ENCODE measurements at regions of chr1 and their contacts with region 1.

Region 1: DNA sequence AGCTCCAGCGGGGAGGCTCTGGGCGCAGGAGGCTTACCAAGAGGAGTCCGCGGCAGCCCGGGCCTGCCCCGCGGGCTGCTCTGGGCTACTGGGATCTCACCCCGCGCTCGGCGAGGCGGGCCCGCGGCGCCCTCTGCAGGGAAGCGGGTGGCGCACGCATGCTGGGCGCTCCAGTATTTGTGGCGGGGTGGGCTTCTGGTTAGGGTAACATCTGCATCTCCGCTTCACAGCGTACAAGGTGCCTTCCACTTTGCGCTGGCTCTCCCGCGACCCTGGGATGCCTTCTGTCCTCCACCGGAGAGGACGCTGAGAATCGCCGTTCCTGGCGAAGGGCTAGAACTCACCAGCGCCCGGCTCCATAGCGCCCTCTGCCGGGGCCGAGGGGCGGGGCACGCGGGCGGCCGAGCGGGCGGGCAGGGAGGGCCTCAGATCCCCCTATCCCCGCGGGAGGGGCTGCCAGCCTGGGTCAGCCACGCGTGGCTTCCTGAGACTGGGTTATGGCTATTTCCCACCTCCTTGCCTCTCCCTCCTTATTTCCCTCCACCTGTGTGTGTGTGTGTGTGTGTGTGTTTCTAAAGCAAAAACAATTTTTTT is 46.6 kb upstream of the CTBS start:
- DNase-seq: peak; percentile 70
- H3K4me3 ChIP-seq: peak overlapping the region; percentile 58 to 72 (median 64)
- H3K27ac ChIP-seq: peak overlapping the region; percentile 34
- H3K4me1 ChIP-seq: peaks cover 13% of the 10 kb centered on the region
- H3K27me3 ChIP-seq: no peaks in the 10 kb centered on the region
- CTCF ChIP-seq: peak; percentile 55 to 77

Region 2: DNA sequence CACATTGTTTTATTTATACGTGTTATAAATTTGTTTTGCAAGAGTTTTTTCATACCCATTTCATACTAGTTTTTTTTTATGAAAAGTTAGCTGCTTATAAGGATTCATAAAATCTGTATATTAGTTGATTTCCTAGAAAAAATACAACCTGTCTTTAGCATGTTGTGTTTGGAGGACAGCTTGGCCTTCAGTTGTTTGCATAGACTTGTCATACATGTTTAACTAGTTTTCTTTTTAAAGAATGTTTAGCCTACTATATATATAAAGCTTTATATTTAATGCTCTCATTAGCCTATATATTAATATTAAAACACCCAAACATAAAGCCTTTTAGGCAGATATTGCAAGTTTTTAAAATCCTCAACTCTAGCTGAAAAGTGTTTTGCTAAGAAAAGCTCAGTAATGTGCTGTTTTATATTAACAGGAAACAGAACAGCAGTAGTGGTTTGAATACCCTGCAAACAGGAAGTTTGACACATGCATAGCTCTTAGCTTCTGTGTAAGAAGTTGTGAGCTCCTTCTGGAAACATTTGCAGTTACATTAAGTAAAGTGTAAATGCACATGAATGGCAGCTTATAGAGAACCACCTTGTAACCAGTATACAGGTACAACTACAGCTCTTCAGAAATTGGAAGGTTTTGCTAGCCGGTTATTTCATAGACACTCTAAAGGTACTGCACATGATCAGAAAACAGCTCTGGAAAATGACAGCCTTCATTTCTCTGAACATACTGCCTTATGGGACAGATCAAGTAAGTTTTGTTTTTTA is 476.8 kb before region 1 on chr1 and contains the start of gene PRKACB:
- CTCF ChIA-PET with region 1: no interaction called
- dilution Hi-C with region 1: no loop called
- in situ Hi-C with region 1: no loop called
- intact Hi-C with region 1: loop called (anchors 5 kb)
- DNase-seq: peak; percentile 27
- H3K4me3 ChIP-seq: no peak within 1 kb of the TSS
- H3K27ac ChIP-seq: no peak within 1 kb of the TSS
- H3K4me1 ChIP-seq: peaks cover 17% of the 10 kb centered on the region
- H3K27me3 ChIP-seq: no peaks in the 10 kb centered on the region
- CTCF ChIP-seq: no peak
- total RNA-seq, gene PRKACB: 25.3 to 29.0 TPM

Region 3: DNA sequence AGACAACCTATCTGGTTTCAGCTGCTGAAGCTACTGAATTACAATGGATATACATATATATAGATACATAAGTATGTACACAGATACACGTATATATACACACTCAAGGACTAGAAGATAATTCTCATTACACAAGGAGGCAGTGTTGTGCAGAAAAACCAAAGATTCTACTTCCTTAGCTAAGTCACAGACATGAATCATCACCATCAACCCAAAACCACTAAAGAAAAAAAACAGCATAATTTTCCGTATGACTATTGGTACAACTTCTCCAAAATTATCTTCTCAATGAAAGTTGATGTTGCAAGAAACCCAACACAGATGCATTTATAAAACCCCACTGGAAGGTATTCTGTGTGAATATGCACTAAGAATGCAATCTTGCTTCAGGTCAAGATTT is 178.6 kb before region 1 on chr1:
- CTCF ChIA-PET with region 1: no interaction called
- dilution Hi-C with region 1: no loop called
- in situ Hi-C with region 1: loop called (anchors 10 kb)
- intact Hi-C with region 1: loop called (anchors 1 kb)
- DNase-seq: peak; percentile 83
- H3K4me3 ChIP-seq: no peak overlapping the region
- H3K27ac ChIP-seq: no peak overlapping the region
- H3K4me1 ChIP-seq: peaks cover 8% of the 10 kb centered on the region
- H3K27me3 ChIP-seq: no peaks in the 10 kb centered on the region
- CTCF ChIP-seq: peak; percentile 53 to 60

Region 4: DNA sequence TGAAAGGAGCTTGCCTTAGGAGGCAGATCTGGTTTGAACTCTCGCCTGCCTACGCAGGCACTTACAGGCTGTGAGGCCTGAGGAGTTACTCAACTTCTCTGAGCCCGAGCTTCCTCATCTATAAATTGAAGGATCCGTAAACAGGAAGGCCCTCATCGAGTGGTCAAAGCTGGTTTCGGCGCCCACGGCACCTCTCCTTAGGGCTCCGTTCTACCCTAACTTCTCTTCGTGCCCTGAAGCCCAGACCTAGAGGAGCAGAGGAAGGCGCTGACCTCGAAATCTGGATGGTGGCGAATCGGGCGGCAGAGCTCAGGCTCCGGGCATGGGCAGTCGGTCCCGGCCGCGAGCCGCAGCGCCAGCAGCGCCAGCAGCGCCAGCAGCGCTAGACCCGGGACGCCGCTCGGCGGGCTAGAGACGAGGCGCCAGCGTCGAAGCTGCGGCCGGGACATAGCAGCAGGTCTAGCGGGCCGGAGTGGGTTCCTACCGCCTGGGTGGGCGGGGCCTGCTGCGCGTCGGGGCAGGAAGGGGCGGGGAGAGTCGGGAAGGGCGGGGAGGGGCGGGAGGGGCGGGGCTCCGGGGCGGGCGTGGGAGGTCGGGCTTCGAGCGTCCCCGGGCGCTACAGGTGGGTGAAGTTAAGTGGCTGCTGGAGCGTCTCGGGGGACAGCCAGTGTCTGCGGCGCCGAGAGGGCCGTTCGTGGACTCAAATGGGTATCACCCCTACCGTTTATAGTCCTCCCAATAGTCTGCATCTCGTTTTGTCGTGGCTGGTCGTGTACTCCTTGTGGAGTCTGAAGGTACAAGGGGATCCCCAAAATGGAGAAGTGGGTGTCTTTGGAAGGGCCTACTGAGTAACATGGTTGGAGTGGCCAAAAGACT is 46.6 kb before region 1 on chr1 and contains the start of gene CTBS:
- CTCF ChIA-PET with region 1: no interaction called
- dilution Hi-C with region 1: no loop called
- in situ Hi-C with region 1: no loop called
- intact Hi-C with region 1: loop called (anchors 2 kb)
- DNase-seq: peak; percentile 79
- H3K4me3 ChIP-seq: peak within 1 kb of the TSS; percentile 61 to 80 (median 68)
- H3K27ac ChIP-seq: peak within 1 kb of the TSS; percentile 83
- H3K4me1 ChIP-seq: peaks cover 22% of the 10 kb centered on the region
- H3K27me3 ChIP-seq: no peaks in the 10 kb centered on the region
- CTCF ChIP-seq: no peak
- total RNA-seq, gene CTBS: 12.3 to 13.1 TPM

Region 5: GRCh38 chr1:84724128-84724860 is 103.5 kb after region 1 on chr1:
- CTCF ChIA-PET with region 1: no interaction called
- dilution Hi-C with region 1: no loop called
- in situ Hi-C with region 1: no loop called
- intact Hi-C with region 1: no loop called
- DNase-seq: no peak
- H3K4me3 ChIP-seq: no peak overlapping the region
- H3K27ac ChIP-seq: no peak overlapping the region
- H3K4me1 ChIP-seq: peaks cover 4% of the 10 kb centered on the region
- H3K27me3 ChIP-seq: no peaks in the 10 kb centered on the region
- CTCF ChIP-seq: peak; percentile 25 to 29

Region 6: GRCh38 chr1:84772428-84772943 is 151.7 kb after region 1 on chr1:
- CTCF ChIA-PET with region 1: no interaction called
- dilution Hi-C with region 1: no loop called
- in situ Hi-C with region 1: loop called in 1 of 2 experiments (anchors 10 kb)
- intact Hi-C with region 1: loop called (anchors 1 kb)
- DNase-seq: peak; percentile 78
- H3K4me3 ChIP-seq: no peak overlapping the region
- H3K27ac ChIP-seq: peak overlapping the region; percentile 20
- H3K4me1 ChIP-seq: peaks cover 17% of the 10 kb centered on the region
- H3K27me3 ChIP-seq: no peaks in the 10 kb centered on the region
- CTCF ChIP-seq: peak; percentile 91 to 95

Measured in mammary epithelial cell (primary cell).